GM18951 (cell line): ENCODE measurements at regions of chr7 and their contacts with region 1.

Region 1: DNA sequence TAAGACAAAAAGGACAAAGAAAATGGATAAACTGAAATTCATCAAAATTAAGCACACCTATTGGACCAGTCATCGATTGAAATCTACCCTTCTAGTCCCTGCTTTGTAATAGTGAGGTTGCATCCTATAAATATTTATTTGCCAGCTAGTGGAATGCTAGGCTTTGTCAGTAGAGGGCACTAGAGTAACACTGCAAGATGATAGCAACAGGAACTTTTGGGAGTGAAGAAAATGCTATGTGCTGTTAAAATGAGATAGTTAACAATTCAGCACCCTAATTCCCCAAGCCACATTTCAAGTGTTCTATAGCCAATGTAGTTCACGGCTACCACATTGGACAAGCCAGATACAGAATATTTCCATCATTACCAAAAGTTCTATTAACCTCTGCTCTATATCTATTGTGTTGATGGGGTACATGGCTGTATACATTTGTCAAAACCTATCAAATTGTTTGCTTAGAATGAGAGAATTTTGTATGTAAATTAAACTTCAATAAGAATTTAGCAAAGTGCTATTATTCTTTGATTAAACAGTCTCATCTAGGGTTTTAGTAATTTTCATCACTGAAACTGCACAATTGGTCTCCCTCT is 69.8 kb downstream of the LSMEM1 start:
- POLR2A ChIP-seq: no peak

Region 2: GRCh38 chr7:112898432-112899290 is 348.1 kb after region 1 on chr7:
- in situ Hi-C with region 1: loop called (anchors 10 kb)
- POLR2A ChIP-seq: no peak

Region 3: DNA sequence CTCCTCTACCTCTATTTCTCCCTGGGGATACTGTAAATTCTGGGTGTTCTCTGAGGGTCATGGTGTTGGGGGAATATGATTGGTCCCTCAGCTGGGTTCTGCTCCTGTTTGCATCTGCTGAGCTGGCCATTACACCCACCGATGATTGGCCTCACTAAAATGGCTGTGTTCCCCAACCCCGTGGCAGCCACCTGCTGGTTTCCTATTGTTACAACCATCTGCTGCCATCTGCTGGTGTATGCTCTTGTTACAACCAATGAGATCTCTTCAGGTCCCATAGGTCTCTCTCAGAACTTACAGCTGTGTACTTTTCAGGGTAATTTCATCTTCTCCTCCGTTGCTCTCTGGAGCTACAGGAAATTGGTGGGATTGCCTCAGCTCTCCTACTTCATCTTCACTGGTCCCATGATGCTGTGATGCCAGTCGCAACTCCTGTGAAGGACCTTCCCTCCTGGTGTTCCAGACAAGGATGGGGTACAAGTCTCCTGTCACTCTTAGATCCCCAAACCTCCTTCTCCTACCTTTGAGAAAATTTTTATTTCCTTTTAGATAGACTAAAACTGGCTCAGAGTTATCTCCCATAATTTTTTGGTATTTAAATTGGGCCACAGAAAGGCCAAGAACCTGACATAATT is 871.2 kb after region 1 on chr7:
- in situ Hi-C with region 1: loop called (anchors 25 kb)
- POLR2A ChIP-seq: no peak